Ascending aorta (tissue), 2 donors: ENCODE measurements at regions of chr13 and their contacts with region 1.

Region 1: GRCh38 chr13:46492946-46493345 is 60.0 kb upstream of the LRCH1 start:
- DNase-seq: no peak
- H3K4me3 ChIP-seq: no peak overlapping the region
- H3K27ac ChIP-seq: peak overlapping the region in 1 of 2 donors; percentile 32
- H3K4me1 ChIP-seq: peaks cover 5 to 23% of the 10 kb centered on the region in 2 donors
- H3K27me3 ChIP-seq: no peaks in the 10 kb centered on the region
- CTCF ChIP-seq: peak; percentile 42 to 72 (median 60)

Region 2: DNA sequence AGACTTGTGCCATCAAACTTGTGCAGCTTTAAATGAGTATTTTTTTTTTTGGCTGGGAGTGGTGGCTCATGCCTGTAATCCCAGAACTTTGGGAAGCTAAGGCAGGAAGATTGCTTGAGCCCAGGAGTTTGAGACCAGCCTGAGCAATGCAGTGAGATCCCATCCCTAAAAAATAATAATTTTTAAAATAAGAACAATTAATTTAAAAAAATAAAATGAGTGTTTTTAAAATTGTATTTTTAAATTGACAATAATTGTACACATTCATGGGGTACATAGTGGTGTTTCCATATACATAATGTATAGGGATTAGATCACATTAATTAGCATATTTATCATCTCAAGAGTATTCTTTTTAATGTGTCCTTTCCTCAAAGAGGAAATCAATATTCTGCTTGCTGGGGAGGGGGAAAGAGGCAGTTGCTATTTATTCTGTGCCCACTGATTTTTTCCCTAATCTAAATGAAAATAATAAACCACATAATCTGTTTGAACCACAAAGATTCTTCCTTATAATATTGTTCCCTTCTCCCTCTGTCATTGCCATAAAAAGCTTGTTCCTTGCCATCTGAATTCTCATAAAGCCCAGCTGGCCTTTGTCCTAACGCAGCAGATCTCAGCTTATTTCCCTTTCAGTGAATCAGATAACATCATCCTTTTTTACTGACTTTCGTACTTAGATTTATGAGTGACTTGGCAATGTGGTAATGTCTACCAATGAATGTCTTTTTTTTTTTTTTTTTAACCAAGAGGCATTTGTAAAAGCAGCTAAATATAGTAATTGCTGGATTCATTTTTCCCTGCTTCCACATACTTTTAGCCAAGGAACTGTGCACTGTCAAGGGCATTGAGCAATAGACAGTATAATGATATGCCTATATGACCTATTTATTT is 24.1 kb before region 1 on chr13:
- intact Hi-C with region 1: loop called (anchors 2 kb)
- DNase-seq: no peak
- H3K4me3 ChIP-seq: no peak overlapping the region
- H3K27ac ChIP-seq: peak overlapping the region; percentile 32 to 63
- H3K4me1 ChIP-seq: peaks cover 0 to 9% of the 10 kb centered on the region in 2 donors
- H3K27me3 ChIP-seq: no peaks in the 10 kb centered on the region
- CTCF ChIP-seq: no peak

Region 3: DNA sequence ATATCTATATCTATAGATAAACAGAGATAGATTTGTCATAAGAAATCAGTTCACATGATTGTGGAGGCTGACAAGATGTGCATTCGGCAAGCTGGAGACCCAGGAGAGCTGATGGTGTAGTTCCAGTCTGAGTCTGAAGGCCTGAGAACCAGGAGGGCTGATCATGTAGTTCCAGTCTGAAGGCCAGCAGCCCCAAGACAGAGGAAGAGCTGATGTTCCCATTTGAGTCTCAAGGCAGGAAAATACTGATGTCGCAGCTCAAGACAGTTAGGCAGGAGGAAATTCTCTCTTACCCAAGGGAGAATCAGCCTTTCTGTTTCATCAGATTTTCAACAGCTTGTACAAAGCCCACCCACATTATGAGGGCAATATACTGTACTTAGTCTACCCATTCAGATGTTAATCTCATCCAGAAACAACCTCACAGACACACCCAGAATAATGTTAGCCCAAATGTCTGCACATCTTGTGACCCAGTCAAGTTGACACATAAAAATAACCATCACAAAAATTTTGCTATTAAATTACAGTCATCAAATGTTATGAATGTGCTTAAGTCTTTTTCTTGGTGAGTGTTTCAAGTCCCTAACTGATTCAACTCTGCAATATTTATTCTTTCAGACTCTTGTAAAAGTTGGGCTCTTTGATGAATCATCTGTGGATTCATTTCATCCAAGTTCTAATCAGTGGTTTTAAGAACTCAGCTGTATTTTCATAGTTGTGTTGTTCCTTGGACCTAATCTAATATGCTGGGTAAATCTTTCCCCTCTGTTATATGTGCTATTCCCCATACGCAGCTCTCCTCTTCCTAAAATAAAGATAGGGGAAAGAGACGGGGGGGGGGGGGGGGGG is 37.4 kb after region 1 on chr13:
- intact Hi-C with region 1: loop called (anchors 5 kb)
- DNase-seq: no peak
- H3K4me3 ChIP-seq: no peak overlapping the region
- H3K27ac ChIP-seq: peak overlapping the region; percentile 19 to 31
- H3K4me1 ChIP-seq: peaks cover 0 to 3% of the 10 kb centered on the region in 2 donors
- H3K27me3 ChIP-seq: no peaks in the 10 kb centered on the region
- CTCF ChIP-seq: no peak

Region 4: DNA sequence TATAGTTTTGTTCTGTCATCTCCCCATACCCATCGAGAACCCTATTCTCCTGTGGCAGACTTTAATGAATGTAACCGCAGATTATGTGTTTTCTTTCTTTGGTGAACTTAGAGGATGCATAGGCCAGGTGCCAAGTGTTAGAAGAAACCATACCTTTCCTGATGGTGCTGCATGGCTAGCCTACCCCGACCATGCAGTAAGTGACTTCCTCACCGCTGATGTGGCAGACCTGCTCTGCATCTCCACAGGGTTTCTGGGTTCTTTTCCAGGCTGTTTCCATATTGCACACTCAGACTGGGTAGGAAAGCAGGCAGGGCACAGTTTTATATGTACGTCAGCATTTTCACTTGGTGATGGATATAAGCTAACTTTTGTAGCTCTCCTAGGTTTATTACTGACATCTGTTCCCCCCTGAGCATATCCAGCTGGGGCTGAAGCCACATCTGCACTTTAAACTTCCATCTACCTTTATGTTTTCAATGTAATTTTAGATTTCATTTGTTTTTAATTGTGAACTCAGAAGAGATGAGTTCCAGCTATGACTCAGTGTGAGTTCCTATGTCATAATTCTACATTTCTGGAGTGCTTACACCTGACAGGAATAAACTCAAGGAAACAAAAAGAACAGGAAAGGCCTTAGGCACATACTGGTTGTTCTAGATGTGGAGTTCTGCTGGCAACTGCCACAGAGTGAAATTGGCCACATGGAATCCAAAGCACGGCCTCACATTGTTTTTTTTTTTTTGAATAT is 102.4 kb after region 1 on chr13:
- intact Hi-C with region 1: no loop called
- DNase-seq: no peak
- H3K4me3 ChIP-seq: no peak overlapping the region
- H3K27ac ChIP-seq: peak overlapping the region; percentile 43 to 50
- H3K4me1 ChIP-seq: peaks cover 12 to 51% of the 10 kb centered on the region in 2 donors
- H3K27me3 ChIP-seq: no peaks in the 10 kb centered on the region
- CTCF ChIP-seq: no peak